Aorta (tissue), 5 donors: ENCODE measurements at regions of chr3 and their contacts with region 1.

Region 1: DNA sequence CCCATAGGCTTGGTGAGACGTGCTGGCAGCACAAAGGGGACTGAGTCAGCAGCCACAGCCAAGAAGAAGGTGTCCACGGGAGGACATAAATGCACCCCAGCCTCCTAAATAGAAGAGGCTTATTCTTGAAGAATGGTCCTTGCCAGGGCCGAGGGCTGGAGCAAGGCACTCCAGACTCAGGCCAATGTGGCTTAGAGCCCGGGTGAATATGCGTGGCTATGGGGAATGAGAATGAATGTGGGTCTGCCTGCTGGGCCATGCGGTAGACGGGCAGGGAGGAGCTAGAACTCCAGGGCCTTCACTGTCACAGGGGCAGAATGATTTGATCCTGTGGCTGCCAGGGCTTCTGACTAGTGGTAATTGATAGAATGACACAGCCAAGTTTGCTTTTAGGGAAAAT is 34.0 kb downstream of the DHX30 start:
- DNase-seq: no peak
- ATAC-seq: no peak
- H3K4me3 ChIP-seq: no peak overlapping the region
- H3K27ac ChIP-seq: no peak overlapping the region
- H3K4me1 ChIP-seq: no peaks in the 10 kb centered on the region
- H3K27me3 ChIP-seq: no peaks in the 10 kb centered on the region

Region 2: GRCh38 chr3:47890828-47891612 is 54.0 kb after region 1 on chr3:
- intact Hi-C with region 1: no loop called
- DNase-seq: no peak
- ATAC-seq: peak; percentile 85
- H3K4me3 ChIP-seq: no peak overlapping the region
- H3K27ac ChIP-seq: peak overlapping the region in 1 of 2 donors; percentile 43
- H3K4me1 ChIP-seq: no peaks in the 10 kb centered on the region
- H3K27me3 ChIP-seq: no peaks in the 10 kb centered on the region

Region 3: DNA sequence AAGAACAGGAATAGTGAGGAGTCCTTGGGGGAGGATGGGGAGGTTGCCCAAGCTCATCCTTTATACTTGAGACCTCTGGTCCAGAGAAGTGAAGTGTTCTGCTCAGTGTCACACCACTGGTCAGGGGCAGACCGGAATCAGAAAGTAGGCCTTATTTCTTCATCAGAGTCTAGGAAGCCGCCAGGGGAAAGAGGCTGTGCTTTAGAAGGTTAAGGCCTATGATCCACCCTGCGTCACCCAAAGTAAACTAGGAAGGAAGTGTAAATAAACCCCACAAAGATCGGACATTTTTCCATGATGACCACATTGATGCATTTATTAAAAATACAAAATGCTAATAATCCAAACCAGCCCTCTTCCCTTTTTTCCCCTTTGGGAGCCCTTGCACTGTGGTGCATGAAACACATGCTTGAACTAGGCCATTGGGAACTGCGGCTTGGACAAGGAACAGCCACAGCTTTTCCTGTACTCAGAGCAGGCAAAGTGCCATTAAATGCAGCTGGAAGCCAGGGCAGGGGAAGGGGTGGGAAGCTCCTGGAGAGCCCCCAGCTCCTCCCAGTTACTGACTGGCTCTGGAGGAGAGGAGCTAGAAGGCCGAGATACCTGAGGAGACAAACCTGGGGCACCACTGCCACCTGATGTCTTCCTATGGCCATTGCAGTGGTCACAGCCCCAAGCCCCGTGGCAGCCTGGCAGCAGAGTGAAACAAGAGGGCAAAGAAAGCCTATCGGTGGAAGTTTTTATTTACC is 314.2 kb after region 1 on chr3:
- intact Hi-C with region 1: loop called (anchors 5 kb)
- DNase-seq: peak; percentile 79 to 91
- ATAC-seq: peak; percentile 94
- H3K4me3 ChIP-seq: no peak overlapping the region
- H3K27ac ChIP-seq: peak overlapping the region in 1 of 2 donors; percentile 66
- H3K4me1 ChIP-seq: peaks cover 0 to 1% of the 10 kb centered on the region in 2 donors
- H3K27me3 ChIP-seq: no peaks in the 10 kb centered on the region